ENCODE measurements at regions of chr1 and their contacts with region 1.

Region 1: DNA sequence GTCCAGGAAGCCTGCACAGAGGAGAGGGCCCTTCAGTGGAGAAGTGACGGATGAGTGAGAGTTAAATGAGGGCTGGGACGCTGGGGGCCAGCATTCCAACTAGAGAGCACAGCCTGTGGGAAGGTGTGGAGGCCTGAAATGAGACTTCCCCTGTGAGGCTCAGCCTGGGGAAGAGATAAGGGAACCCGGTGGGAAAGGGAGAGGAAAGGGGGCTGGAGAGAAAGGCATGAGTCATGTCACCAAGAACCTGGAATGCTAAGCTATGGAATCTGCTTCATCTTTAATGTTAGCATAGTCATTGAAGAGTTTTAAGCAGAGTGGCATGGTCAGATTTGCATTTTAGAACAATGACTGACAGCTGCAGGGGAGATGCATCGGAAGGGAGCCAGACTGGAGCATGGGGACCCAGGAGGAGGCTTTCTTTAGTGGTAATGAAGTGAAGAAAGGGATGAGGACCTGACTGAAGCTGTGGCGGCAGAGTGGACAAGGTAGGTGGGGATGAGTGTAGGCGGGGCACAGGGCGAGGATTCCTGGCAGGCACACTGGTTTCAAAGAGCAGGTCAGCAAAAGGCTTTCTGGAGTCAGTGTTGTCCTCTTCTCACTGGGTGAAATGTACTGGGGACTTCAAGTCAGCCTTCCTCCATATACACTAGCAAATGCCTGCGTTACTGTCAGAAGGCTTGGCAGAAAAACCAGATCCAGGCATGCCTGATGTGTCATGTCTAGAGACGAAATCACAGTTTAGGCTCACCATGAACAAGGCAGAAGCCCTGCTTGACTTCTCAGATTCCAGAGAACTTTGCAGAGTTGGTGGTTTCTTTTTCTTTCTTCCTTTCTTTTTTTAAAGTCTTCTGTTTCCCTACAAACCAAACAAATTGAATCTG is 8.0 kb downstream of the RGL1 start:
- DNase-seq: no peak
- ATAC-seq: peak; percentile 29 to 70

Region 2: DNA sequence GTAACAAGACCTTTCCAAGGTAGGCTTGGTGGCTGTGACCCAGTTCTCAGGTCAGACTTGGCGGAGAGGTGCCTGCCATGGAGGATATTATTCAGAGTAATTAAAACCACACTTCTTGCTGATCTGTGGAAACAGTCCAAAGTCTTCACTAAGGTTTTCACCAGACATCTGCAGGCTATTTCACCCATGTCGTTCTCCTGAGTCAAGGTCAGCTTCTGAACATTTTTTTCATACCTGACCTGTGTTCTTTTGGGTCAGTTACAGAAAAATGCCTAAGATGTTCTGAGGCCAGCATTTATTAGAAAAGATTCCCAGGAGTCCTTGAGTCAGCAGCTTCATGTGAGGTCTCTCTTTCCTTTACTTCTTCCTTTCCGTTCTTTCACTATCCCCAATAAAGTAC is 46.9 kb after region 1 on chr1:
- intact Hi-C with region 1: loop called in 1 of 2 experiments (anchors 10 kb)
- DNase-seq: no peak
- ATAC-seq: no peak